SK-N-SH (cell line): ENCODE measurements at regions of chr4 and their contacts with region 1.

Region 1: DNA sequence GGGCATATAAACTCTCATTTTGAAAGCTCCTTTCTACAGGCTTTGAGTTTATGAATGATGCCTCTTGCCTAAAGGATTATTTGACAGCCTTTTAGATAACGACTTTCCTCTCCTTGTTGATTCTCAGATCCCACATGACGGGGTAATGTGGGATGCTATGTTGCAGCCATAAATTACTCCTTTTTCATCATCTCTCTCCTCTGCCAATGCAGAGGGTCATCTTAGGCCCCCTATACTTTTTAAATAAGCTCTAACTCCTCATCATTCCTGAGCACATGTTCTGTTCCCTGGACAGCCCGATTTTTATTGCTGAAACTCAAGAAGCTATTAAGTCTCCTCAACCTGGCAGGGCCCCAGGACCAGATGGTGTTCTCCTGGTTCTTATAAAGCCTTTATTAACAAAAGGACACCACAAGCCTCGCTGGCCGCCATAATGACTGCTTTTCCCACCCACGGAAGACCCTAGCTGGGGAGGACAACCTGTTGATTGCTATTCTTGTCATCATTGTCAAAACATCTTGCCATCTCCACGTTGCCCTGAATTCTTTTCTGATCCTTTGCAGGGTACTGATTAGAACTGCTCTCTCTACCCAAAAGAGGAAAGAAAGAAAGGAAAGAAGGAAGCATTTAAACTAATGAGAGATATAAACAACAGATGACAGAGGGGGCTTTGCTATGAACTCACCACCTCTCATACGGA is 150.7 kb downstream of the DHX15 start:
- DNase-seq: no peak
- H3K4me3 ChIP-seq: no peak overlapping the region
- H3K27ac ChIP-seq: no peak overlapping the region
- H3K4me1 ChIP-seq: no peaks in the 10 kb centered on the region
- H3K27me3 ChIP-seq: peaks cover 47% of the 10 kb centered on the region; the same call in 1 of the 2 replicates
- CTCF ChIP-seq: no peak
- EP300 ChIP-seq: no peak
- RAD21 ChIP-seq: no peak

Region 2: GRCh38 chr4:24405341-24405740 is 28.3 kb before region 1 on chr4:
- CTCF ChIA-PET with region 1: no interaction called
- POLR2A ChIA-PET with region 1: no interaction called
- DNase-seq: no peak
- H3K4me3 ChIP-seq: no peak overlapping the region
- H3K27ac ChIP-seq: no peak overlapping the region
- H3K4me1 ChIP-seq: no peaks in the 10 kb centered on the region
- H3K27me3 ChIP-seq: no peaks in the 10 kb centered on the region; the same call in 1 of the 2 replicates
- CTCF ChIP-seq: no peak
- EP300 ChIP-seq: no peak
- RAD21 ChIP-seq: no peak

Region 3: DNA sequence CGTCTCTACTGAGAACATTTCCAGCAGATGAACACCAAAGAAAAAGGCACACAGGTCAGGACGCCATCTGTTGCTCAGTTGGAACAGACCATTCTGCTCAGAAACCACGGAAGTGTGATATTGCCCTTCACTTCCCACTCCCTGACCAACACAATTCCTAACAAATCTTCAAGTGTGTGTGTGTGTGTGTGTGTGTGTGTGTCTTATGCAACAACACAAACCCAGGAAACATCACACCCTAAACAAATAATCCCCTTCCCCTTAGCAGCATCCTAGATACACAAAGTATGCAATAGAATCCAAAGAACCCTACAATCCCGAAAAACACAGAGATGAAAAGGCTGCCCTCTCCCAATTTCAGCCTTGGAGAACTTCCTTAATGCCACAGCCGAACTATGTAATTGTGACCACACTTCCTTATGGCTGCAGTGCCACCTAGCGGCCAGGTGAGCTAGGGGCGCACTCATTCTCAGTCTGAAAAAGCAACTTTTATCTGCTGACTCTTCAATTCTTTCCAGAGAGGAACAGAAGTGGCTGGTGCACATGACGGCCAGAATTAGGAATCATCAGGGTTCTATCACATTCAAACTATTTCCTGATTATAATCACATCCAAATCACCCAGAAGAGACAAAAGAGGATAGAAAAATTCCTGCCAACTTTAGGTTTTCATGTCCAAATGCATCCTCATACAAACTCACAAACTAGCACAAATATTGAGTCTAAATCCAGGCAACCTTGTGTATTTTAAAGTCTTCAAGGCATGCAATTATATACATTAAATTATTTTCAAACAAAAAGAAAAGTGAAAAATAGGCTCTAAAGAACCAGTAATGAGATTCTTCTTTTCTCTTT is 14.3 kb before region 1 on chr4:
- CTCF ChIA-PET with region 1: interaction called, 12 read pairs
- POLR2A ChIA-PET with region 1: no interaction called
- DNase-seq: peak; percentile 63
- H3K4me3 ChIP-seq: peak overlapping the region in 1 of 2 experiments; percentile 35; a peak in 1 of 4 replicates
- H3K27ac ChIP-seq: no peak overlapping the region
- H3K4me1 ChIP-seq: no peaks in the 10 kb centered on the region
- H3K27me3 ChIP-seq: peaks cover 10% of the 10 kb centered on the region; the same call in 1 of the 2 replicates
- CTCF ChIP-seq: peak; percentile 96
- EP300 ChIP-seq: no peak
- RAD21 ChIP-seq: peak; percentile 95